PC-3 (cell line): ENCODE measurements at regions of chr2 and their contacts with region 1.

Region 1: DNA sequence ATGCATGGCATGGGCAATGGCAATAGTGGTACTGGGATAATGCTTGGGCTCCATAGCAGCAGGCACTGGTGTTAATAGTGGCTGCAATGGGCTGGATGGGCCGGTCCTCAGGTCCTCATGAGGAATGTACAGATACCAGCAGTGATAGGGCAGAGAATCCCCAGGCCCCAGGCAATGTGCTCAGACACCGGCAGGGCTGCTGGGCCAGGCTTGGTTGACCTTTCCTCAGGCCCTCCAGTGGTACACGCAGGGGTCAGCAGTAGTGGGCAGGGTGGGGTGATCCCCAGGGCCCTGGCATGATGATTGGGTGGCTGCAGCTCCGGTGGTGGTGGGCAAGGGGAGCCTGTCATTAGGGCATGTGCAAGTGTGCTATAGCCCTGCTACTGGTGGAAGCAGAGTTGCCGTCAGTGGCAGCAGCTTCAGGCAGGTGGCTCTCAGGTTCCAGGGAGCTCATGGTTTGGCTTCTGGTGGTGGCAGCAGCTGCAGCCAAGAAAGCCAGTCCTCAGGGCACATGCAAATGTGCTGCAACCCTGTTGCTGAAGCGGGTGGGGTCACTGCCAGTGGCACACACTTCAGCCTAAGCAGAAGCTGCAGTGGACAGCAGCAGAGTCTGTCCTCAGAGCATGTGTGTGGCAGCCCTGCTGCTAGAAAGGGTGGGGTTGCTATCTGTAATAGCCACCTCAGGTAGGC is 56.8 kb downstream of the CCNT2 start:
- DNase-seq: no peak
- ATAC-seq: no peak
- H3K4me3 ChIP-seq: no peak overlapping the region
- H3K27ac ChIP-seq: no peak overlapping the region
- H3K4me1 ChIP-seq: no peaks in the 10 kb centered on the region
- H3K27me3 ChIP-seq: no peaks in the 10 kb centered on the region
- CTCF ChIP-seq: no peak

Region 2: DNA sequence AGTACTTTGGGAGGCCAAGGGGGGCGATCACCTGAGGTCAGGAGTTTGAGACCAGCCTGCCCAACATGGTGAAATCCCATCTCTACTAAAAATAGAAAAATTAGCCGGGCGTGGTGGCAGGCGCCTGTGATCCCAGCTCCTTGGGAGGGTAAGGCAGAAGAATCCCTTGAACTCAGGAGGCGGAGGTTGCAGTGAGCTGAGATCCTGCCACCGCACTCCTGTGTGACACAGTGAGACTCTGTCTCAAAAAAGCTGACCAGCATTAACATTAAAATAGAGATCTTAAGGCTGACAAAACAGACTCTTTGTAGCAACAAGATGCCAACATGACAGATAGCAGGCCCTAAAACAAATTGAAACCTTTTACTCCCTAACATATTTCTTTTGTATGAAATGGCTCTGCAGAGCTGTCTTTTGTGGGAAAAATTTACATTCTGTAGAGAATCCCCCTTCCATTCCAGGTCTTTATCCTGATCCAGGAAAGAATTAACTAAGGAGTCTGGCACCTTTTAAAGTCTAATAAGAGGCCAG is 290.6 kb after region 1 on chr2:
- CTCF ChIA-PET with region 1: no interaction called
- POLR2A ChIA-PET with region 1: interaction called, 14 read pairs
- intact Hi-C with region 1: no loop called
- DNase-seq: no peak
- ATAC-seq: no peak
- H3K4me3 ChIP-seq: no peak overlapping the region
- H3K27ac ChIP-seq: no peak overlapping the region
- H3K4me1 ChIP-seq: no peaks in the 10 kb centered on the region
- H3K27me3 ChIP-seq: no peaks in the 10 kb centered on the region
- CTCF ChIP-seq: no peak